ENCODE measurements at regions of chr7 and their contacts with region 1.

Region 1: DNA sequence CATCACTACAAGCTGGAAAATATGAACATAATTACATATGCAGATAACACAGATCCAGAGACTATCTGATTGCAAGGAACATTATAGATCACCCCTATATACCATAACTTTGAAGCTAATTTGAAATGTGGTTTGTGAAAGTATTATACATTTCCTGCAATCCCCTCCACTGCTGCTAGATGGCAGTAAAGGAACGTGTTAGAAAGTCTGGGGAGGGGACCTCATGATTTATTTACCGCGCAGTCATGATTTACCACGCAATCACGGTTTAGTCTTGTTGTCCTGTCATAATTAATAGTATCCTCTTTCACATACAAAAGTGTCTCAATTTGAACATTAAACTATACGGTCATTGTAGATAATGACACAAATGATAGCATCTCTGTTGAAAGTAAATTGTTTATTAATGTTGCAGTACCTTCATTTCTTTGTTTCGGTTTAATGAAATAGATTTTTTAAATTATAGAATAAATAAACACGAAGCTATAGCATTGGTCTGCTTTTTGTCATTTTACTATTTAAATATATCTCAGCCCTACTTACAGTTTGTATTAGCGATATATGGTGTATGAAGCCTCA is 145.3 kb upstream of the PRSS1 start:
- DNase-seq: no peak
- H3K4me3 ChIP-seq: no peak overlapping the region
- H3K27me3 ChIP-seq: no peaks in the 10 kb centered on the region
- CTCF ChIP-seq: peak; percentile 87

Region 2: GRCh38 chr7:142438235-142438922 is 165.6 kb before region 1 on chr7:
- CTCF ChIA-PET with region 1: no interaction called
- POLR2A ChIA-PET with region 1: no interaction called
- DNase-seq: no peak
- H3K4me3 ChIP-seq: no peak overlapping the region
- H3K27me3 ChIP-seq: no peaks in the 10 kb centered on the region
- CTCF ChIP-seq: peak; percentile 68

Region 3: GRCh38 chr7:142523821-142524460 is 80.0 kb before region 1 on chr7:
- CTCF ChIA-PET with region 1: interaction called, 11 read pairs
- POLR2A ChIA-PET with region 1: no interaction called
- DNase-seq: no peak
- H3K4me3 ChIP-seq: no peak overlapping the region
- H3K27me3 ChIP-seq: peaks cover 11% of the 10 kb centered on the region
- CTCF ChIP-seq: peak; percentile 28

Region 4: DNA sequence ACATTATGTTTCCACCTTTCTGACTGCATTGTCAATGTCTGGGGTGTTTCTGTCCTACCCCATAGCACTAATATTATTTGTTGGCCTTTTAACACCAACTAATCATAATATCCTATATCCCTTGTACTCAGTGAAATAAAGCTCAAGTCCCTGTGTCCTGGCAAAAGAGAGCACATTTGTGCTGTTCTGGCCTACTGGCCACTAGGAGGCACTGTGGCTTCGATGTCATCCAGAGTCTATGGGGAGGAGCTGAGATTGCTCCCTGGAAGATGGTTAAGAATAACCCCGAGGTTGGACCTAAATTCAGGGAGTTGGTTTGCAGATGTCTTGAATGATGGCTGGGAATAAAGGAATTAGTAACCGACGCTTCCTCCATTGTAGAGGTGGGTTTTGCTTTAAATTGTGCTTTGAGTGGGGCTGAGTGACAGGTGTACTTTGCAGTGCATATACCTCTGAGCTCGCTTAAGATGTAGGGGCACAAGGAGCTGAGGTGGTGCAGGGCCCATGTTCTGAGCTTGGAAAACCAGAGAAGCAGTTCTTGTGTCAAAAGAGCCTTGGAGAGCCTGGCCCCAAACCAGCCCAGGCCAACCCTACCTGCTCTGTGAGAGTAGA is 45.9 kb before region 1 on chr7:
- CTCF ChIA-PET with region 1: interaction called, 10 read pairs
- POLR2A ChIA-PET with region 1: interaction called, 3 read pairs
- DNase-seq: no peak
- H3K4me3 ChIP-seq: no peak overlapping the region
- H3K27me3 ChIP-seq: no peaks in the 10 kb centered on the region
- CTCF ChIP-seq: peak; percentile 78

Region 5: DNA sequence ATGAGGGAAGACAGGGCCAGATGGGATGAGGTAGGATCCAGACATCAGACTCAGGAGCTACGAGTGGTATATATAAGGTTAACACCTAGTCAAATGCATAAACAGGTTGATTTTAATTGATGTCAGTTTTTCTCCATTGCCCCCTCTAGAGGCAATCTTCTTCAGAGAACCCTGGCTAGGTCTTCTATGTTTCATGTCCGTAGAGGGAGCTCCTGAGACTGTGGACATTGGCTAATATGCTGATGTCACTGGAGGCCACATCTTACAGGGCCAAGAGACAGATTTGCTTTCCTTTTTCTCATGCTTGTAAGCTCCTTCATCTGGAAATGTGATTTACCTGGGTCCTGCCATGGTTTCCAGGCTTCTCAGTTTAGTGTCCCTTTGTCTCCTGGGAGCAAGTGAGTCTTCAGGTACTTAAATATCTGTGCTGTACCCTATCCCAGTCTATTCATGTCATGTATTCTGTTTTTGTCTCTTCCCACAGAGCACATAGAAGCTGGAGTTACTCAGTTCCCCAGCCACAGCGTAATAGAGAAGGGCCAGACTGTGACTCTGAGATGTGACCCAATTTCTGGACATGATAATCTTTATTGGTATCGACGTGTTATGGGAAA is 16.3 kb before region 1 on chr7:
- CTCF ChIA-PET with region 1: interaction called, 52 read pairs
- POLR2A ChIA-PET with region 1: no interaction called
- DNase-seq: no peak
- H3K4me3 ChIP-seq: no peak overlapping the region
- H3K27me3 ChIP-seq: no peaks in the 10 kb centered on the region
- CTCF ChIP-seq: peak; percentile 84

Region 6: GRCh38 chr7:142626420-142627035 is 22.6 kb after region 1 on chr7:
- CTCF ChIA-PET with region 1: interaction called, 16 read pairs
- POLR2A ChIA-PET with region 1: no interaction called
- DNase-seq: no peak
- H3K4me3 ChIP-seq: no peak overlapping the region
- H3K27me3 ChIP-seq: no peaks in the 10 kb centered on the region
- CTCF ChIP-seq: peak; percentile 49

Region 7: DNA sequence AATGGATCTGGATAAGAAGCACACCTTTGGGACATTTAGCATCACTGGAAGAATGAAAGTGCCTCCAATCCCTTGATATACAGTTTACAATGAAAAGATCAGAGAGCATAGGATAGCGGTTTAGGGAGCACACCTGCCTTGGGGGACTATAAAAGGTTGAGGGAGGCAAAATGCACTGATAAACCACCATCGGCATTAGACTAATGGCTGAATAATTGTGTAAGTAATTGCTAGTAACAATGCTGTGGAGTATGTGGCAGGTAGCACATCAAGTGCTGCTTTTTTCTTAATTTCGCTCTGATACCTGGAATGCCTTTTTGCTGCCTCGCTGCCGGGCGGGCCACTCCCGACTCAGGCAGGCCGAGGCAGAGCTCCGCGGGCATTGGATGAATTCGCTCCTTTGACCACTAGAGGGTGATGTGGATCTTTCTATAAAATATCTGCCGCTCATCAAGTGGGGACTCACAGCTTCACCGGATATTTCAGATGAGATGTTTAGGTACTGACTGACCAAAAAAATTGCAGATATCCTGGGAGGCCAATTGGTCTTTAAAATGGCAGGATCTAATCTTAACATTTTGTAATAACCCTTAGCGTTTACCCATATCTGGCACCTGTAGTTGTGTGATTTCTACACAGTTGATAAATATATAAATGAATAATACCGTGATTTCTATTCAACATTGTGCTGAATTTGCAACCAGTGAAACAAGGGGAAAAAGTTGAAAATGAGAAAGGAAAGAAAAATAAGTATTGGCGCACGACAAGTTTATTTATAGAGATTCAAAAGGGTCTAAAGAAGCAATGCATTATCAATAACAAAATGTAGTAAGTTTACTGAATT is 28.6 kb after region 1 on chr7:
- CTCF ChIA-PET with region 1: interaction called, 13 read pairs
- POLR2A ChIA-PET with region 1: no interaction called
- DNase-seq: no peak
- H3K4me3 ChIP-seq: no peak overlapping the region
- H3K27me3 ChIP-seq: no peaks in the 10 kb centered on the region
- CTCF ChIP-seq: peak; percentile 79

Region 8: GRCh38 chr7:142811154-142811737 is 207.3 kb after region 1 on chr7:
- CTCF ChIA-PET with region 1: interaction called, 12 read pairs
- POLR2A ChIA-PET with region 1: no interaction called
- DNase-seq: no peak
- H3K4me3 ChIP-seq: no peak overlapping the region
- H3K27me3 ChIP-seq: peaks cover 6% of the 10 kb centered on the region; the same call in 1 of the 2 replicates
- CTCF ChIP-seq: peak; percentile 71